ENCODE measurements at regions of chr2 and their contacts with region 1.

Region 1: GRCh38 chr2:201532686-201533304 is 81.3 kb downstream of the STRADB start:
- DNase-seq: no peak

Region 2: GRCh38 chr2:201451292-201452057 is 81.3 kb before region 1 on chr2 and contains the starts of genes STRADB and TRAK2:
- in situ Hi-C with region 1: loop called (anchors 10 kb)
- DNase-seq: peak; percentile 98
- total RNA-seq, gene STRADB: 68.7 and 69.4 TPM in 2 replicates
- total RNA-seq, gene TRAK2: 5.9 and 17.8 TPM in 2 replicates